Mammary epithelial cell (primary cell): ENCODE measurements at regions of chr3 and their contacts with region 1.

Region 1: DNA sequence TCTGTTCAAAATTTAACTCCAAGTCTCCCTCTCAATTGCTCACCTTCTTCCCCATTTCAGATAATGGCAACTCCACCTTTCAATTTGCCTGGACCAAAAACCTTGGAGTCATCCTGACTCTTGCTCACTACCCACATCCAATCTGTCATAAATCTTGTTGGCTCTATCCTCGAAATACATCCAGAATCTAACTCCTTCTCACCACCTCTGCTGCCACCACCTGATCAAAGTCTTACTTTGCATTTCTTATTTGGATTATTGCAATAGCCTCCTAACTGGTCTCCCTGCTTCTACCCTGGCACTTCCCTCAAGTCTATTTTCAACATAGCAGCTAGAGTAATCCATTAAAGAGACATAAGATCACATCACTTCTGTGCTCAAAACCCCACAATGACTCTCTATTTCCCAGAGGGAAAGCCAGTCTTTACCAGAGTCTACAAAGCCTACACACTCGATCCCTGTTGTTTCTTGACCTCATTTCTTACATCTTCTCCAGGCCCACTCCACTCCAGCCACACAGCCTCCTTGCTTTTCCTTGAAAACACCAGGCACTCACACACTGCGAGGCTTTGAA is 86.6 kb downstream of the GPR156 start:
- DNase-seq: peak; percentile 67
- H3K4me3 ChIP-seq: no peak overlapping the region
- H3K27ac ChIP-seq: no peak overlapping the region
- H3K4me1 ChIP-seq: peaks cover 8% of the 10 kb centered on the region
- H3K27me3 ChIP-seq: no peaks in the 10 kb centered on the region
- CTCF ChIP-seq: peak; percentile 40 to 58

Region 2: GRCh38 chr3:119702530-119703157 is 495.7 kb before region 1 on chr3 and contains the start of gene CFAP91:
- CTCF ChIA-PET with region 1: no interaction called
- dilution Hi-C with region 1: no loop called
- in situ Hi-C with region 1: no loop called
- intact Hi-C with region 1: loop called (anchors 10 kb)
- DNase-seq: peak; percentile 87
- H3K4me3 ChIP-seq: peak within 1 kb of the TSS; percentile 41 to 50 (median 48)
- H3K27ac ChIP-seq: peak within 1 kb of the TSS; percentile 7
- H3K4me1 ChIP-seq: peaks cover 10% of the 10 kb centered on the region
- H3K27me3 ChIP-seq: no peaks in the 10 kb centered on the region
- CTCF ChIP-seq: no peak
- total RNA-seq, gene CFAP91: 0.17 TPM in 1 of 2 donors, not detected in the other

Region 3: GRCh38 chr3:119891944-119892721 is 306.3 kb before region 1 on chr3:
- CTCF ChIA-PET with region 1: interaction called, 3 read pairs
- dilution Hi-C with region 1: no loop called
- in situ Hi-C with region 1: loop called in 1 of 2 experiments (anchors 10 kb)
- intact Hi-C with region 1: loop called (anchors 1 kb)
- DNase-seq: peak; percentile 56
- H3K4me3 ChIP-seq: no peak overlapping the region
- H3K27ac ChIP-seq: no peak overlapping the region
- H3K4me1 ChIP-seq: peaks cover 4% of the 10 kb centered on the region
- H3K27me3 ChIP-seq: no peaks in the 10 kb centered on the region
- CTCF ChIP-seq: peak; percentile 65 to 67

Region 4: GRCh38 chr3:120039642-120040610 is 158.5 kb before region 1 on chr3:
- CTCF ChIA-PET with region 1: no interaction called
- dilution Hi-C with region 1: no loop called
- in situ Hi-C with region 1: no loop called
- intact Hi-C with region 1: no loop called
- DNase-seq: no peak
- H3K4me3 ChIP-seq: no peak overlapping the region
- H3K27ac ChIP-seq: no peak overlapping the region
- H3K4me1 ChIP-seq: no peaks in the 10 kb centered on the region
- H3K27me3 ChIP-seq: no peaks in the 10 kb centered on the region
- CTCF ChIP-seq: peak in 1 of 2 donors; percentile 6